SK-N-SH (cell line): ENCODE measurements at regions of chr4 and their contacts with region 1.

Region 1: GRCh38 chr4:8241895-8242696 is 27.5 kb upstream of the HTRA3 start:
- DNase-seq: peak; percentile 98
- H3K4me3 ChIP-seq: peak overlapping the region in 1 of 2 experiments; percentile 44; a peak in 1 of 4 replicates
- H3K27ac ChIP-seq: peak overlapping the region in 1 of 2 experiments; percentile 73; a peak in 1 of 4 replicates
- H3K4me1 ChIP-seq: peaks cover 4 to 8% of the 10 kb centered on the region in 2 experiments; a peak in 1 of 4 replicates
- H3K27me3 ChIP-seq: no peaks in the 10 kb centered on the region
- CTCF ChIP-seq: peak; percentile 93
- EP300 ChIP-seq: no peak
- RAD21 ChIP-seq: peak; percentile 94

Region 2: DNA sequence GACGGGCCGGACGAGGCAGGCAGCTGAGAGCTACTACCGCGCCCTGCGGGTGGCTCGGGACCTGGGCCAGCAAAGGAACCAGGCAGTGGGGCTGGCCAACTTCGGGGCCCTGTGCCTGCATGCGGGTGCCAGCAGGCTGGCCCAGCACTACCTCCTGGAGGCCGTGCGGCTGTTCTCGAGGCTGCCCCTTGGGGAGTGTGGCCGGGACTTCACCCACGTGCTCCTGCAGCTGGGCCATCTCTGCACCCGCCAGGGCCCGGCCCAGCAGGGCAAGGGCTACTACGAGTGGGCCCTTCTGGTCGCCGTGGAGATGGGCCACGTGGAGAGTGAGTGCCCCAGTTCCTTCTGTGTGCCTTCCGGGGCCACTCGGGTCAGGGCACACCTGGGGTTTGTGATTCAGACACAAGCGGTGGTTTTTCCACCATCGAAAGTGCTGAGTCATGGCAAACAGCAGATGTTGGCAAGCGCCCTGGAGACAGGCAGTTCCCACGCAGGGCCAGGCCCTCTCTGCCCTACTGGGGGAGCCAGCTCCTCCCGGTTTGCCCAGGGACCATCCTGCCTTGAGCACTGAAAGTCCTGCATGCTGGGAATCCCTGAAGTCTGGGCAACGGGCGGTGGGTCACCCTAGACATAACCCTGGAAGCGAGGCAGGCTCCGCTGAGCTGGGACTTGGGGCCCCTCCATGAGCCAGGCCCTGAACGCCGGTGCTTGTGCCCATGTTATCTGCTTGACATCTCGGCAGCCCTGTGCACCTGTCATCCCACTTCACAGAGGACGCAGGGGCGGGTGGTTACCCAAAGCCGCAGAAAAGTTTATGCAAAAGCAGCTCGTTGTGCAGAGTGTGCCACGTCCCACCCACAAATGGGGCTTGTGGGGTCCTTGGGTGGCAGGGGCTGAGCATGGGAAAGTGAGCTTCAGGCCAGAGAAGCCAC is 13.5 kb before region 1 on chr4:
- CTCF ChIA-PET with region 1: interaction called, 24 read pairs
- POLR2A ChIA-PET with region 1: no interaction called
- DNase-seq: no peak
- H3K4me3 ChIP-seq: no peak overlapping the region
- H3K27ac ChIP-seq: peak overlapping the region in 1 of 2 experiments; percentile 17; a peak in 1 of 4 replicates
- H3K4me1 ChIP-seq: peaks cover 0 to 22% of the 10 kb centered on the region in 2 experiments; a peak in 1 of 4 replicates
- H3K27me3 ChIP-seq: no peaks in the 10 kb centered on the region
- CTCF ChIP-seq: no peak
- EP300 ChIP-seq: no peak
- RAD21 ChIP-seq: no peak

Region 3: DNA sequence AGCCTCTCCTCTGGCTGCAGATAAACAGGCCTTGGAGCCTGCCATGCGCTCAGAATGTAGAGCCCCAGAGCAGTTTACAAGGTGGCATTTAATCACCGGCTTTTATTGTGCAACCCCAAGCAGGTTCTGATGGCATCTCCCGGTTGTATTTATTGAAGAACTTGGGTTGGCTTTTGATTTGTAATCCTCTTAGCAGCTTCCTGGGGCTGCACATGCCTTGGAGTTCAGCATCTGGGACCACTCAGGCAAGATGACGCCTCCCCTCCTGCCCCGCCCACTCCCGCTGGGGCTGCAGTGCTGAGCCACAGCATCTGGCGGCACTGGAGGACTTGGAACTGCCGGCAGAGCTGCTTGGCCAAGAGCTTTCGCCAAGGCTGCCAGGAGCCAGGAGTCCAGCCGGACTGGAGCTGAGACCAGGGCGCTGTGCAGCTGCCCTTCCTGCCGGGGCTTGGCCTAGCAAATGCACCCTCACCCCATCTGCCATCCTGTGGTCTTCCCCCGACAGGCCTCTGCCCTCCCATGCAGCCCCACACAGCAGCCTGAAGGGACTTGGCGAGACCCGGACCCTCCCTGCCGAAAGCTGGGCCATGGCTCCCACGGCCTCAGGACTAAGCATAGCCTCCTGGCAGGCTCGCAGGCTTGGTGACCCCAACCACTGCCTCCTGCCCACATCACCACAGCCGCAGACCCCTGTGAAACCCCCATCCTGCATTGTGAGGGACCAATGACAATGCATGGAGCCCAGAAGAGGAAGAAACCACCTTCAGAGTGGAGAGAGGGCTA is 32.9 kb after region 1 on chr4:
- CTCF ChIA-PET with region 1: interaction called, 26 read pairs
- POLR2A ChIA-PET with region 1: interaction called, 6 read pairs
- DNase-seq: peak; percentile 95
- H3K4me3 ChIP-seq: no peak overlapping the region
- H3K27ac ChIP-seq: peak overlapping the region; percentile 55 to 93; a peak in 3 of 4 replicates
- H3K4me1 ChIP-seq: peaks cover 38 to 39% of the 10 kb centered on the region in 2 experiments
- H3K27me3 ChIP-seq: no peaks in the 10 kb centered on the region
- CTCF ChIP-seq: peak; percentile 60
- EP300 ChIP-seq: peak in 1 of 2 experiments; percentile 43; a peak in 1 of 4 replicates
- RAD21 ChIP-seq: peak; percentile 85

Region 4: DNA sequence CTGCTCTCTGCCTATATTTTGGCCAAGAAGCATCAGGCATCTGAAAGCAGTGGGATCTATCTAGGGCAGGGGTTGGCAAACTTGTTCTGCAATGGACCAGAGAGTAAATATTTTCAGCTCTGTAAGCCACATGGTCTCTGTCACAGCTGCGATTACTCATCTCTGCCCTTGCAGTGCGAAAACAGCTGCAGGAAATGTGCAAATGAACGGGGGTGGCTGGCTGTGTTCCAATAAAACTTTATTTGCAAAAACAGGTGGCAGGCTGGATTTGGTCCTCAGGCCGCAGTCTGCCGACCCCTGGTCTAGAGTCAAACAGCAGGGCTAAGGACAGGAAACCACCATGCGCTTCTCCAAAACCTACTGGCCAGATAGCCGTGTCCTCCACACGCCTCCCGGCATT is 149.9 kb after region 1 on chr4:
- CTCF ChIA-PET with region 1: interaction called, 41 read pairs
- POLR2A ChIA-PET with region 1: no interaction called
- DNase-seq: no peak
- H3K4me3 ChIP-seq: no peak overlapping the region
- H3K27ac ChIP-seq: peak overlapping the region in 1 of 2 experiments; percentile 11; a peak in 1 of 4 replicates
- H3K4me1 ChIP-seq: peaks cover 14 to 44% of the 10 kb centered on the region in 2 experiments
- H3K27me3 ChIP-seq: no peaks in the 10 kb centered on the region
- CTCF ChIP-seq: no peak
- EP300 ChIP-seq: peak in 1 of 2 experiments; percentile 15; a peak in 1 of 4 replicates
- RAD21 ChIP-seq: no peak

Region 5: GRCh38 chr4:8428293-8429097 is 186.4 kb after region 1 on chr4:
- CTCF ChIA-PET with region 1: interaction called, 12 read pairs
- POLR2A ChIA-PET with region 1: interaction called, 3 read pairs
- DNase-seq: peak; percentile 99
- H3K4me3 ChIP-seq: peak overlapping the region; percentile 80 to 90
- H3K27ac ChIP-seq: peak overlapping the region; percentile 47 to 69
- H3K4me1 ChIP-seq: peaks cover 0 to 16% of the 10 kb centered on the region in 2 experiments; a peak in 1 of 4 replicates
- H3K27me3 ChIP-seq: no peaks in the 10 kb centered on the region
- CTCF ChIP-seq: peak; percentile 61
- EP300 ChIP-seq: no peak
- RAD21 ChIP-seq: no peak